ENCODE measurements at regions of chr19 and their contacts with region 1.

Region 1: GRCh38 chr19:14136509-14137281 is at the start of gene ASF1B:
- DNase-seq: peak; percentile 93 to 99 (median 96)
- ATAC-seq: peak; percentile 80
- H3K4me3 ChIP-seq: peak within 1 kb of the TSS; percentile 76 to 79
- H3K4me3 Mint-ChIP-seq: peak within 1 kb of the TSS; percentile 91
- H3K27ac ChIP-seq: peak within 1 kb of the TSS; percentile 73 to 92
- H3K27ac Mint-ChIP-seq: peak within 1 kb of the TSS; percentile 94
- H3K4me1 ChIP-seq: peaks cover 17% of the 10 kb centered on the region
- H3K4me1 Mint-ChIP-seq: peaks cover 33% of the 10 kb centered on the region
- H3K27me3 ChIP-seq: no peaks in the 10 kb centered on the region
- H3K27me3 Mint-ChIP-seq: no peaks in the 10 kb centered on the region
- CTCF ChIP-seq: peak; percentile 68
- total RNA-seq, gene ASF1B: 0.60 to 1.6 TPM

Region 2: GRCh38 chr19:13804830-13805683 is 331.6 kb before region 1 on chr19:
- CTCF ChIA-PET with region 1: no interaction called
- POLR2A ChIA-PET with region 1: no interaction called
- intact Hi-C with region 1: no loop called
- DNase-seq: peak in 2 of 9 experiments; percentile 36 to 46
- ATAC-seq: no peak
- H3K4me3 ChIP-seq: no peak overlapping the region
- H3K4me3 Mint-ChIP-seq: no peak overlapping the region
- H3K27ac ChIP-seq: no peak overlapping the region
- H3K27ac Mint-ChIP-seq: no peak overlapping the region
- H3K4me1 ChIP-seq: no peaks in the 10 kb centered on the region
- H3K4me1 Mint-ChIP-seq: no peaks in the 10 kb centered on the region
- H3K27me3 ChIP-seq: no peaks in the 10 kb centered on the region
- H3K27me3 Mint-ChIP-seq: no peaks in the 10 kb centered on the region
- CTCF ChIP-seq: no peak

Region 3: GRCh38 chr19:13899912-13900584 is 236.6 kb before region 1 on chr19:
- CTCF ChIA-PET with region 1: no interaction called
- POLR2A ChIA-PET with region 1: no interaction called
- intact Hi-C with region 1: no loop called
- DNase-seq: no peak
- ATAC-seq: no peak
- H3K4me3 ChIP-seq: no peak overlapping the region
- H3K4me3 Mint-ChIP-seq: no peak overlapping the region
- H3K27ac ChIP-seq: no peak overlapping the region
- H3K27ac Mint-ChIP-seq: no peak overlapping the region
- H3K4me1 ChIP-seq: no peaks in the 10 kb centered on the region
- H3K4me1 Mint-ChIP-seq: no peaks in the 10 kb centered on the region
- H3K27me3 ChIP-seq: no peaks in the 10 kb centered on the region
- H3K27me3 Mint-ChIP-seq: no peaks in the 10 kb centered on the region
- CTCF ChIP-seq: no peak

Region 4: GRCh38 chr19:14073261-14073924 is 63.3 kb before region 1 on chr19:
- CTCF ChIA-PET with region 1: interaction called, 20 read pairs
- POLR2A ChIA-PET with region 1: interaction called, 6 read pairs
- intact Hi-C with region 1: loop called in 1 of 2 experiments (anchors 2 kb)
- DNase-seq: peak; percentile 55 to 89 (median 76)
- ATAC-seq: peak; percentile 74
- H3K4me3 ChIP-seq: peak overlapping the region; percentile 69 to 86
- H3K4me3 Mint-ChIP-seq: peak overlapping the region; percentile 90
- H3K27ac ChIP-seq: peak overlapping the region; percentile 42 to 65
- H3K27ac Mint-ChIP-seq: peak overlapping the region; percentile 90
- H3K4me1 ChIP-seq: peaks cover 30% of the 10 kb centered on the region
- H3K4me1 Mint-ChIP-seq: peaks cover 10% of the 10 kb centered on the region
- H3K27me3 ChIP-seq: peaks cover 0 to 2% of the 10 kb centered on the region in 2 experiments
- H3K27me3 Mint-ChIP-seq: no peaks in the 10 kb centered on the region
- CTCF ChIP-seq: no peak

Region 5: DNA sequence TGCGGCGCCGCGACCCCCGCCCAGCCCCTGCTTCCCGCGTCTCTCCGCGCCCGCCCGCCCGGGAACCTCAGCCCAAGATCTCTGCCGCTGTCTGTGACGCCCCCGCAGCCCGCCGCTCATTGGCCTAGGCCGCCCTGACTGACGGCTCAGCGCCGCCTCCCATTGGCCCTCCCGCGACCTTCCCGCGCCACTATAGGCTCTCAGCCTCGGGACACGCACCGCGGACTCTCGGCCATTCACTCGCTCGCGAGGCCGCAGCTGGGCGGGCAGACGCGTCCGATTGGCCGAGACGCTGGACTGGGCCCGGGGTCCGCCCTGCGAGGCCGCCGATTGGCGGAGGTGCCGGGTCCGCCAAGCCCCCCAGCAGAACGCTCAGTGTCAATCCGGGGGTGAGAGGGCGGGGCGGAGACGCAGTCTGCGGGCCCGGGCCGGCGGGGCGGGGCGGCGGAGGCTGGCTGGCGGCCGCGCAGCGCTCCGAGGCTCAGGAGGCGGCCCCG is 19.0 kb before region 1 on chr19 and contains the start of gene PRKACA:
- CTCF ChIA-PET with region 1: interaction called, 11 read pairs
- POLR2A ChIA-PET with region 1: interaction called, 13 read pairs
- intact Hi-C with region 1: loop called (anchors 1 kb)
- DNase-seq: peak; percentile 95 to 99 (median 98)
- ATAC-seq: peak; percentile 90
- H3K4me3 ChIP-seq: peak within 1 kb of the TSS; percentile 67 to 72
- H3K4me3 Mint-ChIP-seq: peak within 1 kb of the TSS; percentile 94
- H3K27ac ChIP-seq: peak within 1 kb of the TSS; percentile 52 to 86
- H3K27ac Mint-ChIP-seq: peak within 1 kb of the TSS; percentile 99
- H3K4me1 ChIP-seq: peaks cover 42% of the 10 kb centered on the region
- H3K4me1 Mint-ChIP-seq: peaks cover 41% of the 10 kb centered on the region
- H3K27me3 ChIP-seq: no peaks in the 10 kb centered on the region
- H3K27me3 Mint-ChIP-seq: no peaks in the 10 kb centered on the region
- CTCF ChIP-seq: no peak
- total RNA-seq, gene PRKACA: 37.0 to 40.8 TPM

Region 6: DNA sequence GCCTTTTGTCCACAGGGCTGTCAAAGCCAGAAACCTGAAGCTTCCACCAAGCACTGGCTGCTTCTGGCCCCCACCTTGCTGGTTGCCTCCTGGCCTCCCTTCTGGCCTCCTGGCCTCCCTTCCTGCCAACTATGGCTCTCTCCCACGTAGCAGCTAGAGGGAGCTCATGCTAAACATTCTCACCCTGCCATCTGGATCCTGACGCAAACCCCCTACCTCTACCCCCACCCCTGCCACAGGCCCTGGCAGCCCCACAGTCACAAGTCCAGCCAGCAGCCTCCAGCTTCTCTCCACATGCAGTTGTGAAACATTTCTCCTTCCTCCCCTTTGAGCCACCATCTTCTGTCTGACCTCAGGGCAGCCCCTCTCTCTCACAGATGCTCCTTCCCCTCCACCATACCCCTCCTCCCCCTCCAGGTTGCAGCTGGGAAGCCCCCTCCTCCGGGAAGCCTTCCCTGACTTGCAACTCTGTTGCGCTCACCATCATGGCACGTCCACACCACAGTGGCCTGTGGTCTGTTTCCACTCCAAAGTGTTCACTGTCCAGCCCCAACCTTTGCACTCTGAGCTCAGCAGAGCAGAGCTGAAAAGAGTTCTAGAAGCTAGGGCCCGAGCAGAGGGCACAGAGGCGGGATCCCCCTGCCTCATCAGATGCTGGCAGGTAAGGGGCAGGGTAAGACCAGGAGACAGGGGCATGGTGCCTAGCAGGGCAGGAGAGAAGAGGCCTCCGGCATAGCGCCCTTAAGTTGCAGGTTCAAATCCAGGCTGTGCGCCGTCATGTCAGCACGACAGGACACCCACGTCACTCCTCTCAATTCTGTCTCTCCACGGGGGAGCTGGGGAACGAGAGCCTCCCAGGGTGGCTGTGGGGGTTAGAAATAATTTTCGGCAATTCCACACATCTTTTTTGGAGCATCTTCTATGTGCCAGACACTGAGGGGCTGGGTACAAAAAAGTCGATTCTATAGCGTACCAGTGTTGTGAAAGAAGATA is 62.0 kb after region 1 on chr19:
- CTCF ChIA-PET with region 1: interaction called, 4 read pairs
- POLR2A ChIA-PET with region 1: interaction called, 5 read pairs
- intact Hi-C with region 1: loop called (anchors 2 kb)
- DNase-seq: no peak
- ATAC-seq: no peak
- H3K4me3 ChIP-seq: no peak overlapping the region
- H3K4me3 Mint-ChIP-seq: no peak overlapping the region
- H3K27ac ChIP-seq: no peak overlapping the region
- H3K27ac Mint-ChIP-seq: no peak overlapping the region
- H3K4me1 ChIP-seq: no peaks in the 10 kb centered on the region
- H3K4me1 Mint-ChIP-seq: peaks cover 30% of the 10 kb centered on the region
- H3K27me3 ChIP-seq: no peaks in the 10 kb centered on the region
- H3K27me3 Mint-ChIP-seq: no peaks in the 10 kb centered on the region
- CTCF ChIP-seq: no peak

Region 7: DNA sequence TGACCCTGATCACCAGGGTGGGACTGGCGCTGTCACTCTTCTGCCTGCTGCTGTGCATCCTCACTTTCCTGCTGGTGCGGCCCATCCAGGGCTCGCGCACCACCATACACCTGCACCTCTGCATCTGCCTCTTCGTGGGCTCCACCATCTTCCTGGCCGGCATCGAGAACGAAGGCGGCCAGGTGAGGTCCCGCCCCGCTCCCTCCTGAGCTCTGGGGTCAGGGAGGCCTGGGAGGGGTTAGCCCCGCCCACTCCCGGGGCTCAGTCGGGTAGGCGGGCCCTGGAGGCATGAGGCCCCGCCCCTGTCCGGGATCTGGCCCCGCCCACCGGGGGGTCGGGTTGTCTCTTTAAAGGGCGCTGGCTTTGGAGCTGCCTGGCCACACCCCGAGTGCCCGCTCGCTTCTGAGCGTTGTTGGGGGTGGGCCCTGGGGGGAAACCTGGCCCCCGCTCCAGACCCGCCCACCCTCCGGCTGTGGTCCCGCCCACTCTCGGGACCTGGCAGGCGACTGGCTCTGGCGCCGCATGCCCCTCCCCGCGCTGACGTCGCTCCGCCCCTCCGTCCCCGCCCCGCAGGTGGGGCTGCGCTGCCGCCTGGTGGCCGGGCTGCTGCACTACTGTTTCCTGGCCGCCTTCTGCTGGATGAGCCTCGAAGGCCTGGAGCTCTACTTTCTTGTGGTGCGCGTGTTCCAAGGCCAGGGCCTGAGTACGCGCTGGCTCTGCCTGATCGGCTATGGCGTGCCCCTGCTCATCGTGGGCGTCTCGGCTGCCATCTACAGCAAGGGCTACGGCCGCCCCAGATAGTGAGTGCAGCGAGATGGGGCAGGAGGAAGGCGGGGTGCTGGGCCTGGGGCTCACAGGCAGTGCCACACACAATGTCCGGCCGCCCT is 269.3 kb after region 1 on chr19:
- CTCF ChIA-PET with region 1: interaction called, 11 read pairs
- POLR2A ChIA-PET with region 1: no interaction called
- intact Hi-C with region 1: loop called (anchors 1 to 2 kb)
- DNase-seq: peak; percentile 75 to 95 (median 88)
- ATAC-seq: peak; percentile 83
- H3K4me3 ChIP-seq: no peak overlapping the region
- H3K4me3 Mint-ChIP-seq: no peak overlapping the region
- H3K27ac ChIP-seq: peak overlapping the region; percentile 19 to 62
- H3K27ac Mint-ChIP-seq: peak overlapping the region; percentile 71
- H3K4me1 ChIP-seq: peaks cover 37% of the 10 kb centered on the region
- H3K4me1 Mint-ChIP-seq: peaks cover 22% of the 10 kb centered on the region
- H3K27me3 ChIP-seq: no peaks in the 10 kb centered on the region
- H3K27me3 Mint-ChIP-seq: no peaks in the 10 kb centered on the region
- CTCF ChIP-seq: peak; percentile 91

Region 8: GRCh38 chr19:14479975-14480699 is 343.4 kb after region 1 on chr19:
- CTCF ChIA-PET with region 1: interaction called, 8 read pairs
- POLR2A ChIA-PET with region 1: interaction called, 3 read pairs
- intact Hi-C with region 1: loop called (anchors 1 kb)
- DNase-seq: peak; percentile 55 to 85 (median 64)
- ATAC-seq: peak; percentile 52
- H3K4me3 ChIP-seq: no peak overlapping the region
- H3K4me3 Mint-ChIP-seq: no peak overlapping the region
- H3K27ac ChIP-seq: no peak overlapping the region
- H3K27ac Mint-ChIP-seq: no peak overlapping the region
- H3K4me1 ChIP-seq: peaks cover 16% of the 10 kb centered on the region
- H3K4me1 Mint-ChIP-seq: peaks cover 16% of the 10 kb centered on the region
- H3K27me3 ChIP-seq: peaks cover 0 to 5% of the 10 kb centered on the region in 2 experiments
- H3K27me3 Mint-ChIP-seq: peaks cover 2% of the 10 kb centered on the region
- CTCF ChIP-seq: peak; percentile 93